ENCODE measurements at regions of chr13 and their contacts with region 1.

Region 1: DNA sequence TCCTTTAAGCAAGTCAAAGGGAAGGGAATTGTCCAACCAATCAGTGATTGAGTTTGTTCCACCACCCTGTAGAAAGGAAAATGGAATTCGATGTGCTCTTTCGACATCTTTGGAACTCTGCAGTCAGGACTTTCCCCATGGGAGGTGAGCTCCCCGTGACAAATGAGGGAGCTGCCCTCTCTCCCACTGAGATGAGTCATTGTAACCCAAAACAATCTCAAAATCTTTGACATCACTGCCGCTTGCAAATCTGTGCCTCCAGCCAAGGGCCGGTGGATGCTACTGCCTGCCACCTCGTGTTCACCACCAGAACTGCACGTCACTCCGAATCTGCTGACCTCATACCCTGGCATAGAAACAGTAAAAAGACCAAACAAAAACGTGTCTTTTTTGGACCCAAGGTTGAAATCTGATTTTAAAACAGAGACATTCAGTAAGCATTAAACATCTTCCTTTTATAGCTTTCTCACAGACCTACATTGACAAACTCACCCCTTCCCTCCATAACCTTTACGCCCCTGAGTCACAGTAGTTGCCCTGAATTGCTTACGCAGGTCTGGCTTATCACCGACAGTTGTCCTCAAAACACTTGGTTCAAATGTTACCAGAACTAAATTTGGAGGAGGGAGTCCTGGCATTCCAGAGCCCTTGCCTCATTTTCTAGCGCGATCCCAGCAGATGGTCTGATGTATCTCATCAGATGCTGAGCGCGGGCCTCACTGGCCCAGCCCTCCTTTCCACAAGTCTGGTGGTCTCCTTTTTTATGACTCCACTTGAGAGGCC is 105.2 kb downstream of the COL4A2 start:
- DNase-seq: peak; percentile 97
- H3K4me3 ChIP-seq: no peak overlapping the region
- H3K27ac ChIP-seq: peak overlapping the region; percentile 86 to 98 (median 92)
- H3K4me1 ChIP-seq: peaks cover 81 to 95% (median 92%) of the 10 kb centered on the region in 4 donors
- H3K27me3 ChIP-seq: no peaks in the 10 kb centered on the region
- CTCF ChIP-seq: peak; percentile 91 to 98 (median 94)
- EP300 ChIP-seq: peak; percentile 89
- POLR2A ChIP-seq: no peak

Region 2: GRCh38 chr13:110233181-110233950 is 179.0 kb before region 1 on chr13:
- intact Hi-C with region 1: loop called (anchors 5 kb)
- DNase-seq: peak; percentile 93
- H3K4me3 ChIP-seq: peak overlapping the region; percentile 13 to 35 (median 22)
- H3K27ac ChIP-seq: peak overlapping the region; percentile 61 to 77 (median 68)
- H3K4me1 ChIP-seq: peaks cover 63 to 86% (median 79%) of the 10 kb centered on the region in 4 donors
- H3K27me3 ChIP-seq: no peaks in the 10 kb centered on the region
- CTCF ChIP-seq: peak in 1 of 3 experiments; percentile 2
- EP300 ChIP-seq: no peak
- POLR2A ChIP-seq: no peak

Region 3: GRCh38 chr13:110306960-110307746 is 105.2 kb before region 1 on chr13 and contains the starts of genes COL4A1 and COL4A2:
- intact Hi-C with region 1: loop called (anchors 5 kb)
- DNase-seq: no peak
- H3K4me3 ChIP-seq: peak within 1 kb of the TSS; percentile 93 to 97 (median 94)
- H3K27ac ChIP-seq: peak within 1 kb of the TSS; percentile 99
- H3K4me1 ChIP-seq: peaks cover 50 to 68% (median 63%) of the 10 kb centered on the region in 4 donors
- H3K27me3 ChIP-seq: peaks cover 0 to 5% (median 2%) of the 10 kb centered on the region in 4 donors
- CTCF ChIP-seq: no peak
- EP300 ChIP-seq: no peak
- POLR2A ChIP-seq: peak; percentile 86
- total RNA-seq, gene COL4A1: 328 to 578 (median 405) TPM
- total RNA-seq, gene COL4A2: 419 to 931 (median 555) TPM

Region 4: GRCh38 chr13:110340812-110341444 is 71.4 kb before region 1 on chr13:
- intact Hi-C with region 1: loop called (anchors 5 kb)
- DNase-seq: peak; percentile 98
- H3K4me3 ChIP-seq: peak overlapping the region; percentile 30 to 40 (median 36)
- H3K27ac ChIP-seq: peak overlapping the region; percentile 91 to 98 (median 92)
- H3K4me1 ChIP-seq: peaks cover 70 to 100% (median 96%) of the 10 kb centered on the region in 4 donors
- H3K27me3 ChIP-seq: no peaks in the 10 kb centered on the region
- CTCF ChIP-seq: no peak
- EP300 ChIP-seq: peak; percentile 93
- POLR2A ChIP-seq: no peak